A549 (cell line): ENCODE measurements at regions of chr9 and their contacts with region 1.

Region 1: DNA sequence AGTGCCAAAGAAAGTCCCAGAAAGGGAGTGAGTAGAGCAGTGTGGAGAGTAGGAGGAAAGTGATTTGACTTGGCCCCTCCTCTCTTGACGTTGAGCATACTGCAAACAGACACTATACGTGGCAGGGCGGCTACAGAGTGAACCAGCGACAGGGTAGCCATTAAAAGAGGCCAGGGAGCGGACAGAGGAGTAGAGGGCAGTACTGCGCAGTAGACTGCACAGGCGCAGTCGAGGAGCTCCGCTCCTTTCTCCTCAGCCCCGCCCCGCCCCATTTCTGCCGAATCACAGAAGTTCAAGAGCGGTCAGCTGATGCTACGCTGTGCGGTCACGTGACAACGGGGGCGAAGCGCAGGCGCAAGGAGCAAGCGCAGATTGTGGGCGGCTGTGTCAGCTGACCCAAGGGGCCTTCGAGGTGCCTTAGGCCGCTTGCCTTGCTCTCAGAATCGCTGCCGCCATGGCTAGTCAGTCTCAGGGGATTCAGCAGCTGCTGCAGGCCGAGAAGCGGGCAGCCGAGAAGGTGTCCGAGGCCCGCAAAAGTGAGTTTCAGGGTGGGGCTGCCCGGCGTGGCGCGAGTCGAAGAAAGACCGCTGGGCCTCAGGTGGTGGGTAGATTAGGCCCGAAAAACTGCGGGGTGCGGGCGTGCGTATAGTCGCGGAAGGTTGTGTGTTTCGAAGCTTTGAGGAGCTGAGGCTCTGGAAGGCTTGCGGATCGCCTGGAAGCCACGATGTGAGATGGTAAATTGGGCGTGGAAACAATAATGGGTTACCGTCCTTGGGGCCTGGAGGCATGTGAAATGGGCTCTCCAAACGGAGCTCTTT is at the start of gene ATP6V1G1:
- DNase-seq: peak; percentile 98 to 99
- ATAC-seq: peak; percentile 99
- H3K4me3 ChIP-seq: peak within 1 kb of the TSS; percentile 95
- H3K27ac ChIP-seq: peak within 1 kb of the TSS; percentile 87 to 95
- H3K4me1 ChIP-seq: peaks cover 28% of the 10 kb centered on the region; the same call in 2 of the 3 replicates
- CTCF ChIP-seq: no peak
- EP300 ChIP-seq: no peak
- POLR2A ChIP-seq: peak; percentile 88
- RAD21 ChIP-seq: peak; percentile 10 to 19; a peak in 2 of 5 replicates
- polyA plus RNA-seq, gene ATP6V1G1: 143 and 168 TPM in 2 replicates

Region 2: DNA sequence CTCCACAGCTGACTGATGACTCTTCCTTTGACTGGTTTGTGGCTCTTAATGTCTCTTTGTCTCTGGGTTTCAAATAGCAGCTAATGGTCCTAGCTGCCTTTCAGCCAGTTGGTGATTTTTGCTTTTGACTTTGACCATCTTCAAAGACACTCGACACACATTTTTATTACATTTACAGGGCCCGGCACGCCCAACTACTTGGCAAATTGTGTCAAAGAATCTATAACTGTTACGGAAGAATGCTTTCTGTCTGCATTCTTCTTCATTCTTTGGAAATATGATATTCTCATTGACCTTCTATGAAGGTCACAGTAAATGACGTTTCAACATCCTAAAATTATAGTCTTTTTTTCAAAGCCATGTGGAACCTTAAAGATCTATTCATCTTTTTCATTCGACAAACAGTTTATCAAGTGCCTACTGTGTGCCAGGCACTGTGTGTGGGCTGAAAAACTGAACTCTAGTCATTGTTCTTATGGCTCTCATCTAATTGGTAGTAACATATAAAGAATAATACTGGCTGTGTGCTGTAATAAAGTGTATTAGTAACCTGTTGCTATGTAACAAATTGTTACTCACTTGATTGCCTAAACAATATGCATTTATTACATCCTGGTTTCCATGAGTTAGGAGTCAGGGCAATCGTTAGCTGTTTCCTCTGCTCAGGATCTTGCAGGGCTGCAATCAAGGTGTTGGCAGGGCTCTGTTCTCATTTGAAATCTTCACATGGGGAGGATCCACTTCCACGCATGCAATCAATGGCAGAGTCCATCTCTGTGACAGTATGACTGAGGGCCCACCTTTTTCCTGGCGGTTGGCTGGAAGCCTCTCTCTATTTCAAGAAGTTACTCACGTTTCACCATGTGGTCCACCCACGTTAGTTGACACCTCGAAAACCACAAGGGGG is 75.4 kb before region 1 on chr9:
- CTCF ChIA-PET with region 1: interaction called, 3 read pairs
- POLR2A ChIA-PET with region 1: interaction called, 45 read pairs
- DNase-seq: no peak
- ATAC-seq: no peak
- H3K4me3 ChIP-seq: no peak overlapping the region
- H3K27ac ChIP-seq: no peak overlapping the region
- H3K4me1 ChIP-seq: no peaks in the 10 kb centered on the region
- CTCF ChIP-seq: no peak
- EP300 ChIP-seq: no peak
- POLR2A ChIP-seq: no peak
- RAD21 ChIP-seq: no peak

Region 3: GRCh38 chr9:114538241-114538640 is 49.4 kb before region 1 on chr9:
- CTCF ChIA-PET with region 1: interaction called, 10 read pairs
- POLR2A ChIA-PET with region 1: interaction called, 13 read pairs
- DNase-seq: peak in 1 of 2 experiments; percentile 70
- ATAC-seq: peak; percentile 95 to 97
- H3K4me3 ChIP-seq: no peak overlapping the region
- H3K27ac ChIP-seq: no peak overlapping the region
- H3K4me1 ChIP-seq: no peaks in the 10 kb centered on the region
- CTCF ChIP-seq: peak; percentile 27; the same call in 2 of the 3 replicates
- EP300 ChIP-seq: no peak
- POLR2A ChIP-seq: no peak
- RAD21 ChIP-seq: peak; percentile 30 to 35; a peak in 3 of 5 replicates

Region 4: GRCh38 chr9:114551883-114552685 is 35.5 kb before region 1 on chr9:
- CTCF ChIA-PET with region 1: interaction called, 3 read pairs
- POLR2A ChIA-PET with region 1: interaction called, 46 read pairs
- DNase-seq: peak; percentile 89 to 97
- ATAC-seq: peak; percentile 100
- H3K4me3 ChIP-seq: no peak overlapping the region
- H3K27ac ChIP-seq: peak overlapping the region; percentile 73 to 86
- H3K4me1 ChIP-seq: peaks cover 21% of the 10 kb centered on the region
- CTCF ChIP-seq: no peak
- EP300 ChIP-seq: peak; percentile 26 to 49; a peak in 1 of 5 replicates
- POLR2A ChIP-seq: no peak
- RAD21 ChIP-seq: no peak

Region 5: DNA sequence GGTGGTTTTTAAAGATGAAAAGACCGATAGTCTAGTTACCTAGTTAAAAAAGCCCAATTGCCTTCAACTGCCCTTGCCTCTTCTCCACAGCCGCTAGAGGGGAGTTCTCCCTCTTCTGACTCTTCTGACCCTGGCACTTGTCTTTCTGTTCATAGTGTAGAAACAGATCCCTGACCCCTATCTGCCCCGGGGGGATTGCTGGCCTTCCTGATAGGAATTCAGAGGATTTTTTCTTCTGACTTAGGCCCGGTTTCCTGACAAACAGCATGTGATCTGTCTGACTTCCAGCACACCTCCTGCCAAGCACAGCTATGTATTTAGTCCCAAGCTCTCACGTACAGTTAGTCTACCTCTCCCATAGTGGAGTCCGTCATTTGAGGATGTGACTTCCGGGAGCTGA is 18.5 kb after region 1 on chr9:
- CTCF ChIA-PET with region 1: interaction called, 4 read pairs
- POLR2A ChIA-PET with region 1: interaction called, 20 read pairs
- DNase-seq: no peak
- ATAC-seq: no peak
- H3K4me3 ChIP-seq: no peak overlapping the region
- H3K27ac ChIP-seq: peak overlapping the region; percentile 3 to 38; a peak in 3 of 6 replicates
- H3K4me1 ChIP-seq: peaks cover 17% of the 10 kb centered on the region; the same call in 1 of the 3 replicates
- CTCF ChIP-seq: no peak
- EP300 ChIP-seq: no peak
- POLR2A ChIP-seq: no peak
- RAD21 ChIP-seq: no peak